ENCODE measurements at regions of chr13 and their contacts with region 1.

Region 1: DNA sequence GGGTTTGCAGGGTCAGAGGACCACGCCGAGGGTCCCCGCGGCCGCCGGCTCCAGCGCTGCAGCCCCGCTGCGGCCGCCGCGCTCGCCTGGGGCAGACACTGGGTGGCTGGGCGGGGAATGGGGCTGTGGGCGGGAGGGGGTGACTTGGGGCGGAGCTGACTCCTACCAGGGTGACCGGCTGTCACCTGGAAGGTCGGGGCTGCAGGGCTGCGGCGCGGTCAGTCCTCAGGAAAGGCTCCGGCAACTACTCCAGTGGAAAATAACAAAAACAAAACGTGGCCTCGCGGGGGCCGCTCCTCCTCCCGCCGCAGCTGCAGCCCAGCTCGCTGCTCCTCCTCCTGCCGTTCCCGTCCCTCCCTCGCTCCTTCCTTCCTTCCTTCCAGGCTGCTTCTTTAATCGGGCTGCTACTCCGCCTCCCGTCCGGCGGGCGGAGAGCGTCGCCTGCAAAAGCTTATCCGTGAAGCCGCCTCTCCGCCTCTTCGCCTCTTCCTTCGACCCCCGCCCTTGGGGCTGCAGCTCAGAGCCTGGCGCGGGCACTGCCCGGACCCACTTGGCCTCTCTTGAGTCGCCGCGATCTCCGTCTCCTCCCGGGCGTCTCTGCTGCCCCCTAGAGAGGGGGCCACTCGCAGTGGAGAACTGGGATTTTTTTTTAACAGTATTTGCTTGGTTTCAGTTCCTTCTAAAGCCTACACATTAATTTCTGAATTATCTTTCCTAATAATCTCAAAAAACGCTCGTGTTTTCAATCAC is at the start of gene TBC1D4:
- DNase-seq: peak; percentile 94

Region 2: GRCh38 chr13:74966814-74967424 is 515.3 kb before region 1 on chr13:
- CTCF ChIA-PET with region 1: no interaction called
- POLR2A ChIA-PET with region 1: no interaction called
- DNase-seq: no peak

Region 3: GRCh38 chr13:75372517-75372916 is 109.7 kb before region 1 on chr13:
- CTCF ChIA-PET with region 1: interaction called, 34 read pairs
- POLR2A ChIA-PET with region 1: interaction called, 5 read pairs
- DNase-seq: peak; percentile 68

Region 4: DNA sequence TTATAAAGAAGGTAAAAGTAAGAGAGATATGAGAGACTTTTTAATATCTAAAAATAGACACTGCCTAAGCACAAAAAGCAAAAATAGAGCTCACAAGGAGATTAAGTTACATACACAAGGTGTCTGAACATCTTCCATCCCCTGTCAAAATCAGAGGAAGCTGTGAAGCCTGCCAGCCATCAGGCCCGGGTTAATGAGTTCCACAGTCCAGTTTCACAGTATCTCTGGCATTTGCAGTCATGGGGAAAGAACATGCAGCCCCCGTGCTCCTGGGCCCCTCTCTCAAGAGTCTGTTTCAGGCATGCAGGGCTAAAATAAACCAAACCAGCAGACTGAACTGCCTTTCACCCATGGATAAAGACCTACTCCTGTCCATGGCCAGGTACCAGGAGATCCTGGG is 79.5 kb before region 1 on chr13:
- CTCF ChIA-PET with region 1: interaction called, 16 read pairs
- POLR2A ChIA-PET with region 1: no interaction called
- DNase-seq: no peak

Region 5: DNA sequence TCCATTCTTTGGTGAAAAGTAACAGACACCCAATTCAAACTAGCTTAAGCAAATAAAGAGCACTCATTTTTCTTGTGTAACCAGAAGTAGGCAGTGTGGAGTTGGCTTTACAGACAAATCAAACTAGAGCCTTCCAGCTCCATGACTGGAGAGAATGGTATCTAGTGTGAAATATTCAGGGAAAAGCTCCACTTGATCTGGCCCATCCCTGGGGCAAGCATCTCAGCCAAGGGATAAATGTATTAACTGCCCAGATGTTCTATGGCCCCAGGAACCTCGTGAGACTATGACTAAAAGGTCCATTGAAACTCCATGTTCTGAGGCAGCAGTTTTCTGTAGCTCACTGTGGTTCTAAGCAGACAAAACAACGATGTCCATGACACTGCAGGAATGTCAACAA is 50.2 kb before region 1 on chr13:
- CTCF ChIA-PET with region 1: interaction called, 9 read pairs
- POLR2A ChIA-PET with region 1: interaction called, 10 read pairs
- DNase-seq: no peak

Region 6: DNA sequence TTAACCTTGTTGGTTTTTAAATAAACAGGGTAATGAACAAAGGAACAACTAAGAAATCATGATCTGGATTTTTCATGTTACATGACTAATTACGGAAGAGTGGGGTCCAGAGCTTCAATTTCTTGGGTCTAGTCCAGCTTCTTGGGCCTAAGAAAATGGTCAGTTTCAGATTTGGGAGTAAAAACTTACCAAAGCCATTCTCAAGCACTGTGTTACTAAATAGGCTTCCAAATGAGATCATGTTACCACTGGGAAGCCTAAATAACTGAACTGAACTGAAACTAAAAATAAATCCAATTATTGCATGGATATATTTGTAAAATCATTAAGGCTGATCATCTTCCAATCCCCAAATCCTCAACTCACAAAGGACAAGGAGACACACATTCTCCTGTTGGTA is 14.1 kb before region 1 on chr13:
- CTCF ChIA-PET with region 1: interaction called, 24 read pairs
- POLR2A ChIA-PET with region 1: interaction called, 6 read pairs
- DNase-seq: no peak

Region 7: DNA sequence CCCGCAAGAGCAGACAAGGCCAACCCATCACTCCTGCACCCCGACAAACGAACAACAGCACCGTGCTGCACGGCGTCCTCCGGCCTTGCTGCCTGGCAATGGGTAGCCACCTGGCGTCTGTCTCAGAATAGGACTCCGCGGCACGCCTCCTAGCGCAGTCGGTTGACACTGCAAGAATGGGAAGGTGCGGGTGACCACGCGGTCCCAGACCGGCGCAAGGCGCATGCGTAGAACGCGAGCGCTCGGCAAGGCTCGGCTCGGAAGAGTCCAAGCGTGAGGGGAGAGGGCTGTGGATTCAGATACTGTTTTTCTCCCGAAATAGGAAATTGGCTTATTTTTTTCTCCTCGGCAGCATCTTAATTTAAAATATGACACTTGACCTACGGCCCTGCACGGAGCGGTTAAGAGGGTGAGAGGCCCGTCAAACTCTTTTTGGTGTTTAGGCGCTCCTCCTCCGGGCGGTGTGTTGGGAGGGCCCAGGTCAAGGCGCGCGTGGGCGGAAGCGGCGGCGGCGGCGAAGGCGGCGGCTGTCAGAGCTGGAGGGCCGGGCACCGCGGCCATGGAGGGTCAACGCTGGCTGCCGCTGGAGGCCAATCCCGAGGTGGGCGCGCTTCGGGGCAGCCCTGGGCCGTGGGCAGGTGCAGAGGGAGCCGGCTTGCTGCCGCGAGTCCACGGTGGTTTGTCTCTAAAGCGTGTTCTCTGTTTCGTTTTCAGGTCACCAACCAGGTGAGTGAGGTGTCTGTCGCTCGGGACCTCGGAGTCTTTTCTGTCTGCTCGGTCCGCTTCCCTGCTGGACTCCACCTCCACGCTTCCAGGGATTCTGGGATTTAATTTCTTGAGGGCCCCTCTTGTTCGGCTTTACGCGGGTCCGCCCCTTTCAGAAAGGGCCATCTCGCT is 67.3 kb after region 1 on chr13 and contains the start of gene UCHL3:
- CTCF ChIA-PET with region 1: interaction called, 3 read pairs
- POLR2A ChIA-PET with region 1: interaction called, 15 read pairs
- DNase-seq: peak; percentile 100

Measured in HEK293T (cell line).